Mammary epithelial cell (primary cell): ENCODE measurements at regions of chr21 and their contacts with region 1.

Region 1: DNA sequence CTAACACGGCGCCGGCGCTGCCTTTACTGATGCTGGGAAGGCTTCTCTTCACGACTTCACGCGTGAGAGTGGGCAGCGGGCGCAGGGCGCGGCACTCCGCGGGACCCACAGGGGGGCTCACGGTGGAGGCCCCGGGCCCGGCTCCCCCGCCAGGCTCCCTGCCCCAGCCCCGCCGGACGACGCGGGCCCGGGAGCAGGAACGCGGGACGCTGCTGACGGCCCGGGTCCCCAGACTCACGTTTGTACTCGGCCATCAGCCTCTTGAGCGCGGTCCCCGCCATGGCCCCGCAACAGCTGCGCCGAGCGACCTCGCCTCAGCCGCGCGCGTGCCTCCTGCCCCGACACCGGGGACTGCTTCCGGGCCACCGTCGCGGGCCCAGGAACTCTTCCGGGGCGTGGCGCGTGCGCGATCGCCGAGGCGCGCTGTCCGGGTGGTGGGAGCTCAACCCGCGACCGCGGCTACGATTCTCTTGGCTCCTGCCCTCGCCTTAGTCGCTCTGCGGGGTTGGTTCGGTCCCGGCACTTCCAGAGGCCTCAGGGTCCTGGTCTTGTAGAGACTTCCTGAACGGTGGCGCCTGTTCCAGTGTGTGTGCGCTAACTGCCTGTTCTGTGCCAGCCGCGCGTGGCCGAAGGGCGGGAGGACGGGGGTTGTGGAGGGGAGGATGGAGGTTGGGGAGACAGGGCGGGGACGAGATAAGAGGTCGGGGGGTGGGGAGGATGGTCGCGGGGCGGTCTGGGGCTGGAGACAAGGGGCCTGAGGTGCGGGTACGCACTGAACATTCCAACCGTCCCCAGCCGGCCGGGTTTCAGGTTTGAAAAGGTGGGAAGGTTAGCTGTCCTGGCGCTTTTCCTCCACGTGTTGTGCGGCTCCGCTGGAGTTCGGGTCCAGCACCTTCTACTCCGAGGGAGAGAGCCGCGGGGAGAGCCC is at the start of gene UBE2G2:
- DNase-seq: peak; percentile 79
- H3K4me3 ChIP-seq: peak within 1 kb of the TSS; percentile 71 to 98 (median 92)
- H3K27ac ChIP-seq: peak within 1 kb of the TSS; percentile 58
- H3K4me1 ChIP-seq: peaks cover 12% of the 10 kb centered on the region
- H3K27me3 ChIP-seq: no peaks in the 10 kb centered on the region
- CTCF ChIP-seq: no peak
- total RNA-seq, gene UBE2G2: 85.7 to 93.1 TPM

Region 2: GRCh38 chr21:44737706-44738354 is 63.9 kb before region 1 on chr21:
- CTCF ChIA-PET with region 1: no interaction called
- dilution Hi-C with region 1: no loop called
- in situ Hi-C with region 1: no loop called
- intact Hi-C with region 1: no loop called
- DNase-seq: peak; percentile 49
- H3K4me3 ChIP-seq: no peak overlapping the region
- H3K27ac ChIP-seq: no peak overlapping the region
- H3K4me1 ChIP-seq: no peaks in the 10 kb centered on the region
- H3K27me3 ChIP-seq: no peaks in the 10 kb centered on the region
- CTCF ChIP-seq: no peak

Region 3: GRCh38 chr21:44749759-44750674 is 51.7 kb before region 1 on chr21:
- CTCF ChIA-PET with region 1: no interaction called
- dilution Hi-C with region 1: no loop called
- in situ Hi-C with region 1: no loop called
- intact Hi-C with region 1: no loop called
- DNase-seq: no peak
- H3K4me3 ChIP-seq: no peak overlapping the region
- H3K27ac ChIP-seq: no peak overlapping the region
- H3K4me1 ChIP-seq: peaks cover 17% of the 10 kb centered on the region
- H3K27me3 ChIP-seq: no peaks in the 10 kb centered on the region
- CTCF ChIP-seq: no peak

Region 4: DNA sequence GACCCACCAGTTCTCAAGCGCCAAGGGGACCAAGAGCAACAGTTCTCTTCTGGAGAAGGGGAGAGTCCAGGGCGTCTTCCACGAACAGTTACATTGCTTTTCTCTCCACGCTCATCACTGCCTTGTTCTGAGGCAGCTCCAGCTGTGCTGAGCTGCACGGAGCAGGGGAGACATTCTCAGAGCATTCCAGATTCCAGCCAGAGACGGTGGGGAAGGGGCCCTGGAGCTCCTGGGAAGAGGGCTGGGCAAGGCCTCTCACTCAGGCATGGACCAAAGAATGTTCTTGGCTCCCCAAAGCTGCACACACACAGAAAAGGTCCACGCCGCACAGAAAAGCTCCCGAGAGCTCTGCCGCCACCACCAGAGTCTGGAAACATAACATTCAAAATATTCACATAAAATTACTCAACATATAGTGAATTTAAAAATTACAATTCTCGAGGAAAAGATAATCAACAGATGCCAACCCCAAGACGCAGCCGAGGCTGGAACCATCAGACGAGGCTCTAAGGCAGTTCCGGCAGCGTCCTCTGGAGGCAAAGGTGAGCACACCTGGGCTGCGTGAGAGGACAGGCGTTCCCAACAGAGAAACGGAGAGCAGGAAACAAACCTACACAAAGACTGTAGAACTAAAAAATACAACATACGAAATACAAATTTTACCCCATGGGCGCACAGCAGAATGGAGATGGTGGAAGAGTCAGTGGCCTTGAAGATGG is 40.6 kb before region 1 on chr21:
- CTCF ChIA-PET with region 1: no interaction called
- dilution Hi-C with region 1: no loop called
- in situ Hi-C with region 1: no loop called
- intact Hi-C with region 1: no loop called
- DNase-seq: no peak
- H3K4me3 ChIP-seq: no peak overlapping the region
- H3K27ac ChIP-seq: no peak overlapping the region
- H3K4me1 ChIP-seq: peaks cover 25% of the 10 kb centered on the region
- H3K27me3 ChIP-seq: no peaks in the 10 kb centered on the region
- CTCF ChIP-seq: peak; percentile 49 to 55

Region 5: GRCh38 chr21:44854664-44855446 is 53.1 kb after region 1 on chr21:
- CTCF ChIA-PET with region 1: no interaction called
- dilution Hi-C with region 1: loop called (anchors 5 kb)
- in situ Hi-C with region 1: no loop called
- intact Hi-C with region 1: no loop called
- DNase-seq: no peak
- H3K4me3 ChIP-seq: no peak overlapping the region
- H3K27ac ChIP-seq: no peak overlapping the region
- H3K4me1 ChIP-seq: peaks cover 18% of the 10 kb centered on the region
- H3K27me3 ChIP-seq: no peaks in the 10 kb centered on the region
- CTCF ChIP-seq: no peak

Region 6: DNA sequence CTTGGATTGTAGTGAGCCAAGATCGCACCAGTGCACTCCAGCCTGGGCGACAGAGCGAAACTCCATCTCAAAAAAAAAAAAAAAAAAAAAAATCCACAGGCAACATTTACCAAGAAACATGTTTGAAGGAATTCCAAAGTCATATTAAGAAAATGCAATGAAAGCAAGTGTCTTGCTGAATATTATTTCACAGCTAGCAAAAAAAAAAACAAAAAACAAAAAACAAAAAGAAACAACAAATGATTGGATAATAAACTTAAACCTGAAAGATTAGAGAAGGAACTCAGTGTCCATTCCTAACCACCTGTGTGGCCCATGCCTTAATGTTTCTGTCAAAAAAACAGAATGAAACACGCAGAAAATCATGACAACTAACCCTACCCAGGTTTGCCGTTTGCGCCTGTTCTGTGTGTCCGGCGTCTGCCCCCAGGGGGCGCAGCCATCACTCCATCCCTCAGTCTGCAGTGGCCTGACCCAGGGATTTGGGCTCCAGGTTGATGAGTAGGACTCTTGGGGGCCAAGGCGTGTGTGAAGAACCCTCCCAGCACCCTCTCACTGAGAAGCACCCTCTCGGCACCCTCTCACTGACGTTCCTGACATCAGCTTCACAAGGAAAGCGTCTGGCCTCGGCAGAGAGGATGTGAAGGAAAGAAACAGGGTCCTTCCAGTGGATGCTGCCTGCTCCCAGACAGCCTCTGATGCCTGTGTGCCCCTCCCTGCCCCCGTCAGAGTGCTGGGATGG is 91.0 kb after region 1 on chr21:
- CTCF ChIA-PET with region 1: no interaction called
- dilution Hi-C with region 1: no loop called
- in situ Hi-C with region 1: no loop called
- intact Hi-C with region 1: loop called (anchors 5 kb)
- DNase-seq: peak; percentile 40
- H3K4me3 ChIP-seq: no peak overlapping the region
- H3K27ac ChIP-seq: no peak overlapping the region
- H3K4me1 ChIP-seq: peaks cover 10% of the 10 kb centered on the region
- H3K27me3 ChIP-seq: no peaks in the 10 kb centered on the region
- CTCF ChIP-seq: peak; percentile 91 to 95

Region 7: GRCh38 chr21:44939532-44940115 is 137.9 kb after region 1 on chr21 and contains the start of gene SLX9:
- CTCF ChIA-PET with region 1: no interaction called
- dilution Hi-C with region 1: loop called (anchors 5 kb)
- in situ Hi-C with region 1: loop called in 1 of 2 experiments (anchors 10 kb)
- intact Hi-C with region 1: no loop called
- DNase-seq: peak; percentile 81
- H3K4me3 ChIP-seq: peak within 1 kb of the TSS; percentile 80 to 95 (median 87)
- H3K27ac ChIP-seq: peak within 1 kb of the TSS; percentile 59
- H3K4me1 ChIP-seq: peaks cover 25% of the 10 kb centered on the region
- H3K27me3 ChIP-seq: no peaks in the 10 kb centered on the region
- CTCF ChIP-seq: no peak
- total RNA-seq, gene SLX9: 17.3 to 53.2 TPM